ENCODE measurements at regions of chr9 and their contacts with region 1.

Region 1: DNA sequence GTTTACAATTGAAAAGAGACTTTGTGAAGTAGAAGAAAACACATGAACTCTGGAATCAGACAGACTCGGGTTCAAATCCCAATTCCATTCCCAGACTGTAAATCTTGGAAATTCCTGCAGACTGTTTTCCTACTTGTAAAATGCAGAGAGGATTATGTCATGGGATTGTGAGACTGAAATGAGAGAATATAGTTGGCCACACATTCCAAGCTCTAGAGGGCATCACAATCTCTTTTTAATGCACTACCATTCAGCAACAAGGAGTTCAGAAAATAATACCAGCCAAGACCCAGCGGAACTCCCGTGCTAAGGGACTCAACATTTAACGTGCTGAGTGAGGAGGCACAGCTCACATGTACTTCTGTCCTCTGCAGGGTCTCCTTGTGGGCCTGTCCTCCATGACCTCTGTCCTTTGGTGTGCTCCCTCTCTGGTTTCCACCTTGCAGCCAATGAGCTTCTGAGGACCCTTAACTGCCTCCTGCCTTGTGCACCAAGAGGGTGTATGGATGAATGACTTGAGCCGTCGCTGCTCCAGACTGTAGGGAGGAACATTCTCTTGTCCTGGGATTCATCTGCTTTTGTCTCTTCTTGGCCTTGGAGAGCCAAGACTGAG is 263.5 kb downstream of the NTRK2 start:
- DNase-seq: no peak
- H3K4me3 ChIP-seq: no peak overlapping the region
- H3K27ac ChIP-seq: no peak overlapping the region
- H3K4me1 ChIP-seq: peaks cover 0 to 5% (median 3%) of the 10 kb centered on the region in 4 experiments; a peak in 3 of 7 replicates
- H3K27me3 ChIP-seq: no peaks in the 10 kb centered on the region
- CTCF ChIP-seq: peak in 2 of 3 experiments; percentile 31 to 62; a peak in 2 of 4 replicates
- EP300 ChIP-seq: no peak
- POLR2A ChIP-seq: no peak
- RAD21 ChIP-seq: peak; percentile 36 to 39

Region 2: GRCh38 chr9:84748112-84748511 is 184.9 kb before region 1 on chr9:
- CTCF ChIA-PET with region 1: no interaction called
- POLR2A ChIA-PET with region 1: no interaction called
- DNase-seq: no peak
- H3K4me3 ChIP-seq: no peak overlapping the region
- H3K27ac ChIP-seq: no peak overlapping the region
- H3K4me1 ChIP-seq: no peaks in the 10 kb centered on the region
- H3K27me3 ChIP-seq: no peaks in the 10 kb centered on the region
- CTCF ChIP-seq: no peak
- EP300 ChIP-seq: no peak
- POLR2A ChIP-seq: no peak
- RAD21 ChIP-seq: no peak

Region 3: GRCh38 chr9:84917366-84918063 is 15.5 kb before region 1 on chr9:
- CTCF ChIA-PET with region 1: interaction called, 38 read pairs
- POLR2A ChIA-PET with region 1: no interaction called
- DNase-seq: no peak
- H3K4me3 ChIP-seq: no peak overlapping the region
- H3K27ac ChIP-seq: no peak overlapping the region
- H3K4me1 ChIP-seq: no peaks in the 10 kb centered on the region; a peak in 1 of 7 replicates
- H3K27me3 ChIP-seq: no peaks in the 10 kb centered on the region
- CTCF ChIP-seq: no peak
- EP300 ChIP-seq: no peak
- POLR2A ChIP-seq: no peak
- RAD21 ChIP-seq: no peak

Region 4: GRCh38 chr9:84947363-84947972 is 14.4 kb after region 1 on chr9:
- CTCF ChIA-PET with region 1: interaction called, 16 read pairs
- POLR2A ChIA-PET with region 1: no interaction called
- DNase-seq: no peak
- H3K4me3 ChIP-seq: no peak overlapping the region
- H3K27ac ChIP-seq: no peak overlapping the region
- H3K4me1 ChIP-seq: no peaks in the 10 kb centered on the region; a peak in 1 of 7 replicates
- H3K27me3 ChIP-seq: no peaks in the 10 kb centered on the region
- CTCF ChIP-seq: no peak
- EP300 ChIP-seq: no peak
- POLR2A ChIP-seq: no peak
- RAD21 ChIP-seq: no peak

Region 5: GRCh38 chr9:85212887-85213286 is 279.9 kb after region 1 on chr9:
- CTCF ChIA-PET with region 1: no interaction called
- POLR2A ChIA-PET with region 1: no interaction called
- DNase-seq: no peak
- H3K4me3 ChIP-seq: no peak overlapping the region
- H3K27ac ChIP-seq: no peak overlapping the region
- H3K4me1 ChIP-seq: peaks cover 2 to 9% (median 7%) of the 10 kb centered on the region in 4 experiments; a peak in 4 of 7 replicates
- H3K27me3 ChIP-seq: no peaks in the 10 kb centered on the region
- CTCF ChIP-seq: no peak
- EP300 ChIP-seq: no peak
- POLR2A ChIP-seq: no peak
- RAD21 ChIP-seq: no peak

Measured in H1 (cell line).